ENCODE measurements at regions of chr19 and their contacts with region 1.

Region 1: DNA sequence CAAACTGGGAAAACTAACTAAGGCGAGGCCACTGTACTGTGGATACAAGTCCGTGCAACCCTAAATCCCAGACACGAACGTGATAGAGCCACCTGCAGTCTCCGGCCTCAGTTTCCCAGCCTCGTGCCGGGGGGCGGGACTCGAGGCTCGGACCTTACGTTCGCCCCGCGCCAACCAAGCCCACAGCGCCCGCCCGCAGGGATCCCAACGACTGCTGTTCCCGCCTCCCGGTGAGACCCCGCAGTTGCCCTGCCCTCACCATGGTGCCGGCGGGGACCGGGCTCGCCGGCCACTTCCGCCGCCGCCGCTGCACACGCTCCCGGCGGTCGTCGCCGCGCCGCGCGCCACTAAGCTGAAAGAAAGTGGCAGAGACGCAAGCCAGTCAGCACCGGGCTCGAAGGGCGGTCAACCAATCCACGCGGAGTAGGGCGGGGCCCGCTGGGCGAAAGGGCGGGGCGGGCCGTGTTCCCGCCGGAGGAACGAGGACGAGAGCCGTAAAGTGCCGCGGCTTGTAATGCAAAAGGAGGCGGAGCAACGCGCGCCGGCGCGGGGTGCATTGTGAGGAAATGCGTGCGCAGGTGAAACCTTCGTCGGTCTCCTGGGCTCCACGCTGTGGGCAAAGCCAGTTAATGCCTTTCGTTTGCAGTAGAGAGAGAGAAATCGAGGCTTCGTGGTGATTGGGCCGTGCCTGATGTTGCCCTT is at the start of gene LSM4:
- DNase-seq: peak; percentile 100
- ATAC-seq: peak; percentile 94
- H3K4me3 Mint-ChIP-seq: peak within 1 kb of the TSS; percentile 90
- H3K27ac Mint-ChIP-seq: peak within 1 kb of the TSS; percentile 98
- H3K4me1 Mint-ChIP-seq: peaks cover 54% of the 10 kb centered on the region
- H3K27me3 Mint-ChIP-seq: no peaks in the 10 kb centered on the region
- total RNA-seq, gene LSM4: 269 to 370 TPM

Region 2: GRCh38 chr19:18097217-18097992 is 225.5 kb before region 1 on chr19 and contains the start of gene MAST3:
- CTCF ChIA-PET with region 1: no interaction called
- POLR2A ChIA-PET with region 1: no interaction called
- intact Hi-C with region 1: loop called in 1 of 2 experiments (anchors 1 kb)
- DNase-seq: peak; percentile 96
- ATAC-seq: peak; percentile 96
- H3K4me3 Mint-ChIP-seq: peak within 1 kb of the TSS; percentile 81
- H3K27ac Mint-ChIP-seq: peak within 1 kb of the TSS; percentile 39
- H3K4me1 Mint-ChIP-seq: peaks cover 31% of the 10 kb centered on the region
- H3K27me3 Mint-ChIP-seq: no peaks in the 10 kb centered on the region
- total RNA-seq, gene MAST3: 17.4 to 20.1 TPM

Region 3: DNA sequence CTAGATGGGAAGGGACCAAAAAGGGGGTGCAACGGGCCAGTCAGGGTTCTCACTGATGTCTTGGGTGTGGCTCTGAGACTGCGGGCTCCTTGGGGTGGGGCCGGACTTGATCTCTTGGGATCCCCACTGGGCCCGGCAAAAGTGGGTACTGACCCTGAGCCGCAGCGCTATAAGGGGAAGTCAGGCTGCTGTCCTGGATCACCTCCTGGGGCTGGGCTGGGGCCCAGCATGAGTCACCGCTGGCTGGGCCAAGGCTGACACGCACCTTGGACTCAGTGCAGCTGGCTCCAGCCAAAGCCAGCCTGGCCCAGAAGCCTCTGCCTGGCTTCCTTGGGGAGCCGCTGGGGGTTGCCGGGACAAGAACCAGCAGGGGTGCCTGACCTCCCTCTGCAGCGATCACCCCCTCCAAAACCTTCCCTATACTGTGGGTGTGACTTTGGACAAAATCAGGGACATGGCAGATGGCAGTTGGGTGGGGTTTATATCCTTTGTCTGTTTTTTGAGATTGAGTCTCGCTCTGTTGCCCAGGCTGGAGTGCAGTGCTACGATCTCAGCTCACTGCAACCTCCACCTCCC is 48.0 kb before region 1 on chr19:
- CTCF ChIA-PET with region 1: interaction called, 208 read pairs
- POLR2A ChIA-PET with region 1: interaction called, 209 read pairs
- intact Hi-C with region 1: loop called (anchors 1 kb)
- DNase-seq: peak; percentile 36
- ATAC-seq: no peak
- H3K4me3 Mint-ChIP-seq: peak overlapping the region; percentile 3
- H3K27ac Mint-ChIP-seq: peak overlapping the region; percentile 8
- H3K4me1 Mint-ChIP-seq: peaks cover 35% of the 10 kb centered on the region
- H3K27me3 Mint-ChIP-seq: no peaks in the 10 kb centered on the region

Region 4: GRCh38 chr19:18291590-18292461 is 31.1 kb before region 1 on chr19:
- CTCF ChIA-PET with region 1: interaction called, 7 read pairs
- POLR2A ChIA-PET with region 1: interaction called, 14 read pairs
- intact Hi-C with region 1: loop called (anchors 1 kb)
- DNase-seq: peak; percentile 96
- ATAC-seq: peak; percentile 38
- H3K4me3 Mint-ChIP-seq: peak overlapping the region; percentile 87
- H3K27ac Mint-ChIP-seq: peak overlapping the region; percentile 99
- H3K4me1 Mint-ChIP-seq: peaks cover 63% of the 10 kb centered on the region
- H3K27me3 Mint-ChIP-seq: no peaks in the 10 kb centered on the region

Region 5: DNA sequence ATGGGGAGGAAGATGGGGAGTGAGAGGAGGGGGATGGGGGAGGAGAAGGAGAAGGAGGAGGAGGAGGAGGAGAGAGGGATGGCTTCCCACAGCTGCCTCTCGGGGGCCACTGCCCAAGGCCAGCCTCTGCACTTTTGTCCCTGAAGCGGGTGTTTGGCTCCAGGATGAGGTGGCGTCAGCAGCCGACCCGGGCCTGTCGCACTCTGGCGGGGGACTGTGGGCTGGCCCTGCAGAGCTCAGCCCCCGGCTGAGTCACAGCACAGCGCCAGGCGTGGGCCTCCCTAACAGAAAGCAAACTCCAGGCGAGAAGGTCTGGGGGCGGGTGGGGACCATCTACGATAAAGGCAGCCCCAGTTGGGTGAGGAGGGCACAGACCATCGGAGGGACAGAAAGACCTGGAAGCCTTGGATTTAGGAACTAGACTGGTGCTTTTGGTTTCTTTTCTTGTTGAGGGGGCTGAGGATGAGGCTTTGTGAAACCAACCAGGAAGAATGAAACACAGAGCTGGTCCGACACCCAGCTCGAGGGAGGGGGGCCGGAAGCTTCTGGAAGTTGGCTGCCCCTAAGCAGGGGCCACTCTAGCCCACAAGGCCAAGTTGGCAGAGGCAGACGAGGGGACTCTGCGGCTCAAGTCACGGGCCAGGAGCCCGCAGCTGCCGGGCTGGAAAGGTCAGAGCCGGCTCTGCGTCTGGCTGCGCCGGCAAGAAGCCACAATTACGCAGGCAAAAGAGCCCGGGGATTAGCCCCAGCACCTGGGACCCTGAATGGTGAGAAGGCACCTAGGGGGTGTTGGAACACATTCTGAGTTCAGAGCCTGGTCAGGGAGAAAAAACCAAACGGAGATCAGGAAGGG is 18.2 kb before region 1 on chr19:
- CTCF ChIA-PET with region 1: interaction called, 21 read pairs
- POLR2A ChIA-PET with region 1: interaction called, 32 read pairs
- intact Hi-C with region 1: loop called (anchors 1 kb)
- DNase-seq: peak; percentile 93
- ATAC-seq: peak; percentile 81
- H3K4me3 Mint-ChIP-seq: peak overlapping the region; percentile 84
- H3K27ac Mint-ChIP-seq: peak overlapping the region; percentile 97
- H3K4me1 Mint-ChIP-seq: peaks cover 50% of the 10 kb centered on the region
- H3K27me3 Mint-ChIP-seq: no peaks in the 10 kb centered on the region

Region 6: GRCh38 chr19:18428787-18429674 is 106.1 kb after region 1 on chr19:
- CTCF ChIA-PET with region 1: no interaction called
- POLR2A ChIA-PET with region 1: no interaction called
- intact Hi-C with region 1: no loop called
- DNase-seq: peak; percentile 88
- ATAC-seq: peak; percentile 85
- H3K4me3 Mint-ChIP-seq: no peak overlapping the region
- H3K27ac Mint-ChIP-seq: no peak overlapping the region
- H3K4me1 Mint-ChIP-seq: peaks cover 34% of the 10 kb centered on the region
- H3K27me3 Mint-ChIP-seq: no peaks in the 10 kb centered on the region

Region 7: DNA sequence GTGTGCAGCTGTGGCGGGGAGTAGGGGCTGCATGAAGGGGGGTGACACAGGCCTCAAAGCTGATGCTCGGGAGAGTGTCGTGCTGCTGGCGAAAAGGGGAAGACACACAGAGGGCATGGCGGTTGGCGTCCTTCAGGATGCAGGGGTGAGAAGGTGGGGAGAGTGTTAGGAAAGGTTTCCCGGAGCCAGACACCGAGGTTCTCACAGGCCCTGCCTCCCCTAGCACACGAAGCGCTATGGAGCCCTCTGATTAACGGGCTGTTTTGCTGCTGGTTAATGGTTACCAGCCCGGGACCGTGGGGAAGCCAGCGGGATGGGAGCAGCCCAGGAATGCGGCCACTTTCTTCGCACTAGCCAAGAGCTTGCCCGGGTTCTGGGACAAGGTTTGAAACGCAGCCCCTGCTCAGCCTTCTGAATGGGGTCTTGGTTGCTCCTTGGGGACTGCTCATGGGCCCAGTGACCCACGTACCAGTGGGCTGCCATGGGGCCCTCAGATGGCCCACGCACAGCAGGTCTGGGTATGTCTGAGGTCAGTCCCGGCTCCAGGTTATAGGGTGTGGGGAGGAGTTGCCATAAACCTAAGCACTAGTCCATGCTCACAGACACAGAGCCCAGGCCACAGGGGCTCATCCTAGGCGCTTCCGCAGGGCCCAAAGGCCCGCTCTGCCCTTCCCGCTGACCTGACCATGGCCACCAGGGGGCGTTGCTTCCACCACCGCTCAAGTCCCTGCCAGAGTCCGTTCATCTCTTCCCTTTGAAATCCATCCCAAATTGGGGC is 146.3 kb after region 1 on chr19:
- CTCF ChIA-PET with region 1: no interaction called
- POLR2A ChIA-PET with region 1: no interaction called
- intact Hi-C with region 1: no loop called
- DNase-seq: peak; percentile 83
- ATAC-seq: peak; percentile 71
- H3K4me3 Mint-ChIP-seq: no peak overlapping the region
- H3K27ac Mint-ChIP-seq: no peak overlapping the region
- H3K4me1 Mint-ChIP-seq: peaks cover 13% of the 10 kb centered on the region
- H3K27me3 Mint-ChIP-seq: no peaks in the 10 kb centered on the region

Region 8: DNA sequence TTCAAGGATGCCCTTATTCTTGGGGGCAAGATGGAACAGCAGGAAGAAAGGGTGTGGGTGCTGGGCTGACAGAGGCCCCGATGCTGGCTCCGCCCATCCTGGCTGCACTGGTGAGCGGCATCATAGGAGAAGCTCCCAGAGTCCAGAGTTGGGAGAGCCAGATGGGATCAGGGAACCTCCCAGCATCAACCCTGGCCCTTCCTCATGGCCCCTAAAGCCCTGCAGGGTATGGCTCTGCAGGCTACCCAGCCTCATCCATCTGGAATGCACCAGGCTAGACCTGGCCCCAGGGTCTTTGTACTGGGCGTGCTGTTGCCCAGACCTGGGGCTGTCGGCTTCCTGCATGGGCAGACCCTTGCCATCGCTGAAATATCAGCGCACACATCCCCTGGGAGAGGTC is 206.9 kb after region 1 on chr19:
- CTCF ChIA-PET with region 1: no interaction called
- POLR2A ChIA-PET with region 1: no interaction called
- intact Hi-C with region 1: no loop called
- DNase-seq: no peak
- ATAC-seq: no peak
- H3K4me3 Mint-ChIP-seq: no peak overlapping the region
- H3K27ac Mint-ChIP-seq: no peak overlapping the region
- H3K4me1 Mint-ChIP-seq: no peaks in the 10 kb centered on the region
- H3K27me3 Mint-ChIP-seq: no peaks in the 10 kb centered on the region

Measured in activated CD4-positive, alpha-beta T cell treated with anti-CD3 and anti-CD28 coated beads for 36 hours (primary cell).